ENCODE measurements at regions of chr2 and their contacts with region 1.

Region 1: DNA sequence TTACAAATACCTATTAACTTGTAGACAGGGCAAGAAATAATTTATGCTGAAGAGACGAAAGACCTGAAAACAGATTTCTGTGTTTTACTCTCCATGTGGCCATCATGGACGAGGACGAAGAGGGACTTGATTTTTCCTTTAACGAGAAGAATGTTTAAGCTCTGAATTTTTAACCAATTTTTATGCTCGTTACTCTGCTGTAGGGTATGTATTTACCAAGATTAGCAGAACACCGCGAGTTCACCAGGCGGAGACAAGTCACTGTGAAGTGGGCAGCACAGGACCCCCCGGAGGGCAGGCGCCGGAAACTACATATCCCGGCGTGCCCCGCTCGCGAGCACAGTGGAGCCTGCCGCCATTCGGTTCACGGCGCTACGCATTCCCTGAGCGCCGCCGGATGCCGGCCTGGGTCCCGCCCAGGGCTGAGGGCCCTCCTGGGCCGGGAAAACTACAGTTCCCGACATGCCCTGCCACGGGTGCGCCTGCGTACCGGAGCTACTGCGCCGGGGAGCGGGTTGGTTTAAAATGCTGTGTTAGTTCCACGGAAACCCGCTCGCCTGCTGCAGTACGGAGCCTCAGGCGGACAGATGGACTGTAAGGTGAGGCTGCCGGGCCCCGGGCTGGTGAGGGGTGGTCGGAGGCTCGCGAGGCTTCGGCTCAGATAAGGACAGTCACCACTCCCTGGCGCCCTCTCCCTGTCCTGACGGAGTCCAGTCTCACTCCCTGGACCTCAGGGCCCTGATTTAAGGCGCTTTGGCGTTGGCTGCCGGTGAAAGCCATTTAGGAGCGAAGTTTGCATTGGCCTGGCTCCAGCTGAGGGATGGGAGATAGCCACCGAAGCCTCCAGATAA is at the start of gene CCDC150:
- DNase-seq: peak; percentile 96
- H3K4me3 ChIP-seq: peak within 1 kb of the TSS; percentile 36 to 86 (median 74)
- H3K27ac ChIP-seq: peak within 1 kb of the TSS; percentile 17
- H3K4me1 ChIP-seq: peaks cover 9% of the 10 kb centered on the region
- H3K27me3 ChIP-seq: no peaks in the 10 kb centered on the region
- CTCF ChIP-seq: peak in 1 of 2 donors; percentile 22
- POLR2A ChIP-seq: no peak
- total RNA-seq, gene CCDC150: 18.1 and 19.9 TPM in 2 replicates

Region 2: DNA sequence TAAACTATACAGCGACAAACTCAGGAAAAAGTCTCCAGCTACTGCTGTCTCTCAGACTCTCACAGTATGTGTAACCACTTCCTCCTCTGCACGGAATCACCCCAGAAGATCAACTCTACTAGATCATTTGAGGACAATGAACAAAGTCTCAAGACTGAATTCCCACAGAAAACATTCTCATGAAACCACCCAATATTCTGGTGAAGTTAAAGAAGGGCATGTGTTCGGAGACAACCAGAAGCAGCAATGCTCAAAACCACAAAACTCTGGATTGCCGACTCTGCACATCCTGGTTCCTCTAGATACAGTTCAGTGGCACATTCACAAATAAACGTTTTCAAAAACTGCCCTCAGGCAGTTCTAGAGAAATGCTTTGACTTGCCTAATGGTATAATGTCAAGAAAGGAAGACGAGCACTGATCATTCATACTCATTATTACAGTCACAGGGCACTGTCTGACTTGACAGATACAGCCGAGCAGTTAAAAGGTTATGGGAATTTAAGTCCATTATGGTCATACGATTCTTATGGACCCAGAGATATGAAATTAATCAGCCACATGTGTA is 376.1 kb before region 1 on chr2:
- CTCF ChIA-PET with region 1: no interaction called
- POLR2A ChIA-PET with region 1: no interaction called
- dilution Hi-C with region 1: no loop called
- intact Hi-C with region 1: no loop called
- DNase-seq: peak; percentile 16
- H3K4me3 ChIP-seq: no peak overlapping the region
- H3K27ac ChIP-seq: peak overlapping the region; percentile 47
- H3K4me1 ChIP-seq: peaks cover 62% of the 10 kb centered on the region
- H3K27me3 ChIP-seq: no peaks in the 10 kb centered on the region
- CTCF ChIP-seq: no peak
- POLR2A ChIP-seq: no peak

Region 3: GRCh38 chr2:196592912-196593881 is 46.2 kb before region 1 on chr2:
- CTCF ChIA-PET with region 1: interaction called, 4 read pairs
- POLR2A ChIA-PET with region 1: no interaction called
- dilution Hi-C with region 1: no loop called
- intact Hi-C with region 1: loop called (anchors 1 kb)
- DNase-seq: peak; percentile 49
- H3K4me3 ChIP-seq: peak within 1 kb of the TSS; percentile 48 to 70 (median 55)
- H3K27ac ChIP-seq: peak within 1 kb of the TSS; percentile 23
- H3K4me1 ChIP-seq: peaks cover 13% of the 10 kb centered on the region
- H3K27me3 ChIP-seq: peaks cover 29 to 39% of the 10 kb centered on the region in 2 experiments
- CTCF ChIP-seq: peak in 1 of 2 donors; percentile 8
- POLR2A ChIP-seq: no peak

Region 4: GRCh38 chr2:196601430-196602306 is 37.7 kb before region 1 on chr2:
- CTCF ChIA-PET with region 1: interaction called, 3 read pairs
- POLR2A ChIA-PET with region 1: no interaction called
- dilution Hi-C with region 1: no loop called
- intact Hi-C with region 1: loop called (anchors 1 kb)
- DNase-seq: peak; percentile 88
- H3K4me3 ChIP-seq: no peak overlapping the region
- H3K27ac ChIP-seq: peak overlapping the region; percentile 82
- H3K4me1 ChIP-seq: peaks cover 25% of the 10 kb centered on the region
- H3K27me3 ChIP-seq: no peaks in the 10 kb centered on the region
- CTCF ChIP-seq: no peak
- POLR2A ChIP-seq: no peak

Measured in endothelial cell of umbilical vein (primary cell).